ENCODE measurements at regions of chr2 and their contacts with region 1.

Region 1: GRCh38 chr2:59888706-59889105 is 664.7 kb downstream of the BCL11A start:
- DNase-seq: no peak
- ATAC-seq: no peak
- H3K4me3 ChIP-seq: no peak overlapping the region
- H3K27ac ChIP-seq: no peak overlapping the region
- H3K4me1 ChIP-seq: no peaks in the 10 kb centered on the region
- H3K27me3 ChIP-seq: no peaks in the 10 kb centered on the region
- CTCF ChIP-seq: no peak
- POLR2A ChIP-seq: no peak
- RAD21 ChIP-seq: no peak

Region 2: DNA sequence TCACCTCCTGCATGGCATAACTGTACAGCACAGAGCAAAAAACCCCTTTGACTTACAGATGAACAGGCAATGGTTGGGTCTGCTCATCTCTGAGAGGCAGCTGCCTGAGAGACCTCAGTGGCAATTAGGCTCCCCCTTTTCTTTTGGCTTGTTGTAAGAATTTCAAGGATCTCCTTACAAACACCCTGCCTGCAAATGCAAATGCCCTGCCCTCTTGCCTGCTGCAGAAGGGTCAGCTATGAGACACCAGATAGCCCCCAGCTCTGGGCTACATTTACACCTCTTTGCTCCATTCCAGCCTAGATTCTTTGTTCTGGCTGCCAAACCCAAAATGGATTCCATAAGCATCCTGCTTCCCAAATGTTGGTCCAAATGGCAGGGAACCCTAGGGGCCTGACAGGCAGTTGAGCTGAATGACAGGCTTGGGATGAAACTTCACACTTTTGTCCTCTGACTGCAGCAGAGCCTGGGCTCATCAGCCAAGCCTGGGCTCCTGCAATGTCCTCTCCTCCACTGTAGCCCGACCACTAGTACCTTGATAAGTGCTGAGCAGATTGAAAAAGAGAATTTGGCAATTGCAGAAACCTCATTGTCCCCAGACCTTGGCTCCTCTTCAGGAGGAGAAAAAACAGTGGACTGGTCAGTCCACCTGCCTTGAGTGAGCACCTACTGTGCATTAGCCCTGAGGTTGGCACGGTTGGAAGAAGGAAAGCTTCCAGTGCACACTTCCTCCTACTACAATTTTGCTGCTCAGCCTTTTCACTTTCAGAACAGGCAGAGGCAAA is 13.5 kb before region 1 on chr2:
- CTCF ChIA-PET with region 1: no interaction called
- POLR2A ChIA-PET with region 1: no interaction called
- dilution Hi-C with region 1: no loop called
- in situ Hi-C with region 1: no loop called
- intact Hi-C with region 1: loop called (anchors 1 kb)
- DNase-seq: no peak
- ATAC-seq: no peak
- H3K4me3 ChIP-seq: no peak overlapping the region
- H3K27ac ChIP-seq: no peak overlapping the region
- H3K4me1 ChIP-seq: no peaks in the 10 kb centered on the region
- H3K27me3 ChIP-seq: no peaks in the 10 kb centered on the region
- CTCF ChIP-seq: no peak
- POLR2A ChIP-seq: no peak
- RAD21 ChIP-seq: no peak

Region 3: DNA sequence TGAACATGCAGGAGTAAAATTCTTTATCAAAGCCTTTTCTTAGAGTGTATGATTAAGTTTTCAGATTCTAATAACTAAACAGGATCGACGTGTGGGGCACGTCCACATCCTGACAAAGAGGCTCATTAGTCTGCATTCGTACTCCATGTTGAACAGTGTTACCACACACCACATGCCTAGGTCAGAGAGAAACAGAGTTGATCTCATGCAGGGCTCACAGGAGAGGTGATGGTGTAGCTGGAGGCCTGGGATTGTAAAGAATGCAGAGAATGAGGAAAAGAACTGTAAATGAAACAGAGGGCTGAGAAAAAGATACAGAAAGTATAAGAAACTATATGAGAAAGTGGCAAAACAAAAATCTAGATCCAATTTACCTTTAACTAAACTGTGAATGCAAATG is 32.3 kb after region 1 on chr2:
- CTCF ChIA-PET with region 1: no interaction called
- POLR2A ChIA-PET with region 1: no interaction called
- dilution Hi-C with region 1: no loop called
- in situ Hi-C with region 1: no loop called
- intact Hi-C with region 1: no loop called
- DNase-seq: no peak
- ATAC-seq: no peak
- H3K4me3 ChIP-seq: no peak overlapping the region
- H3K27ac ChIP-seq: no peak overlapping the region
- H3K4me1 ChIP-seq: no peaks in the 10 kb centered on the region
- H3K27me3 ChIP-seq: no peaks in the 10 kb centered on the region
- CTCF ChIP-seq: no peak
- POLR2A ChIP-seq: no peak
- RAD21 ChIP-seq: no peak

Region 4: GRCh38 chr2:60297296-60298005 is 408.7 kb after region 1 on chr2:
- CTCF ChIA-PET with region 1: no interaction called
- POLR2A ChIA-PET with region 1: no interaction called
- dilution Hi-C with region 1: no loop called
- in situ Hi-C with region 1: no loop called
- intact Hi-C with region 1: no loop called
- DNase-seq: no peak
- ATAC-seq: no peak
- H3K4me3 ChIP-seq: no peak overlapping the region
- H3K27ac ChIP-seq: no peak overlapping the region
- H3K4me1 ChIP-seq: no peaks in the 10 kb centered on the region
- H3K27me3 ChIP-seq: no peaks in the 10 kb centered on the region
- CTCF ChIP-seq: no peak
- POLR2A ChIP-seq: no peak
- RAD21 ChIP-seq: no peak

Region 5: GRCh38 chr2:60780721-60781120 is 892.0 kb after region 1 on chr2:
- CTCF ChIA-PET with region 1: no interaction called
- POLR2A ChIA-PET with region 1: no interaction called
- dilution Hi-C with region 1: no loop called
- in situ Hi-C with region 1: no loop called
- intact Hi-C with region 1: no loop called
- DNase-seq: no peak
- ATAC-seq: no peak
- H3K4me3 ChIP-seq: no peak overlapping the region
- H3K27ac ChIP-seq: no peak overlapping the region
- H3K4me1 ChIP-seq: no peaks in the 10 kb centered on the region
- H3K27me3 ChIP-seq: no peaks in the 10 kb centered on the region
- CTCF ChIP-seq: no peak
- POLR2A ChIP-seq: no peak
- RAD21 ChIP-seq: no peak

Region 6: DNA sequence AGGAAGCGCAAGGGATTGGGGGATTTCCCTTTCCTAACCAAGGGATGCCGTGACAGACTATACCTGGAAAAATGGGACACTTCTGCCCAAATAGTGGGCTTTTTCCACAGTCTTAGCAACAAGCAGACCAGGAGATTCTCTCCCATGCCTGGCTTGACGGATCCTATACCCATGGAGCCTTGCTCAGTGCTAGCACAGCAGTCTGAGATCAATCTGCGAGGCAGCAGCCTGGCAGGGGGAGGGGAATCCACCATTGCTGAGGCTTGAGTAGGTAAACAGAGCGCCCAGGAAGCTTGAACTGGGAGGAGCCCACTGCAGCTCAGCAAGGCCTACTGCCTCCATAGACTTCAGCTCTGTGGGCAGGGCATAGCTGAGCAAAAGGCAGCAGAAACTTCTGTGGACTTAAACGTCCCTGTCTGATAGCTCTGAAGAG is 1132.5 kb after region 1 on chr2:
- CTCF ChIA-PET with region 1: no interaction called
- POLR2A ChIA-PET with region 1: no interaction called
- dilution Hi-C with region 1: no loop called
- in situ Hi-C with region 1: no loop called
- intact Hi-C with region 1: no loop called
- DNase-seq: no peak
- ATAC-seq: no peak
- H3K4me3 ChIP-seq: no peak overlapping the region
- H3K27ac ChIP-seq: no peak overlapping the region
- H3K4me1 ChIP-seq: no peaks in the 10 kb centered on the region; the same call in 1 of the 2 replicates
- H3K27me3 ChIP-seq: no peaks in the 10 kb centered on the region
- CTCF ChIP-seq: no peak
- POLR2A ChIP-seq: no peak
- RAD21 ChIP-seq: no peak